HEK293 (cell line): ENCODE measurements at regions of chr20 and their contacts with region 1.

Region 1: DNA sequence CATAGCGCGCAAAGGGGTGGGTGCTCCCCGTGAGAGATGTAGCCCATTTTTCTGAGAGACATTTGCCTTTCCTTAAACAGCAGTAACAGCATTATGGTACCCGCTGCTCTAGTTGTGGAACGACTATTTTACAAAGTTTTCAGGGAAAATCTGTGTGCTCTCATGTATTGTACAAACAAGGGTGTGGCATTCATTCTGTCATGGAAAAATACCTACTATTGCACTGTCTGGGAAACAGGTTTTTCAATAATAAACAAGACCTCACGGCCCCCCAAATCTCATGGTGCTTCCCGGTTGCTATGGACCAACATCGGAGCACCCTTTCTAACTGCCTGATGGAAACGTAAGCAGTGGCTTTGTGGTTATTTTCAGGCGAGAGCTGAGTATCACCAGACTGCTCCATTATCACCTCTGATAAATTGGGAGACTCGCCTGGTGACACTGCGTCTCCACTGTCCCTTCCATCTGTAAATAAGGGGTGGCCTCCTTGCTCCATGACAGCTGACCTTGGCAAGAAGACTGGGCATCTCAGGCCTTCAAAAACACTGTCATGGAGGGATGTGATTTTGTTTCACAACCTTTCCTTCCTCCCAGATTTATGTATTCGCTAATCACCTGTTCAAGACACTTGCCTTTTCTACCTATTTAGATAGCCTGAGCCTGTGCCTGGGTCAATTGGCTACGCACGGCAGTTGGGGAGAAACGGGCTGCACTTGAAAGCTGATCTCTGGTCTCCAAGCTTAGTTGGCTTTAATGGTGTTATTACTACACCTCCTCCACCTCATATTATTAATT is 17.9 kb upstream of the CDH4 start:
- H3K4me3 ChIP-seq: no peak overlapping the region
- H3K27ac ChIP-seq: no peak overlapping the region
- H3K4me1 ChIP-seq: no peaks in the 10 kb centered on the region
- CTCF ChIP-seq: no peak

Region 2: GRCh38 chr20:60851826-60852704 is 382.1 kb before region 1 on chr20:
- CTCF ChIA-PET with region 1: interaction called, 14 read pairs
- POLR2A ChIA-PET with region 1: no interaction called
- H3K4me3 ChIP-seq: no peak overlapping the region
- H3K27ac ChIP-seq: no peak overlapping the region
- H3K4me1 ChIP-seq: no peaks in the 10 kb centered on the region
- CTCF ChIP-seq: 0 out of 2 replicates have a peak, but pooled peaks have one; percentile 25

Region 3: DNA sequence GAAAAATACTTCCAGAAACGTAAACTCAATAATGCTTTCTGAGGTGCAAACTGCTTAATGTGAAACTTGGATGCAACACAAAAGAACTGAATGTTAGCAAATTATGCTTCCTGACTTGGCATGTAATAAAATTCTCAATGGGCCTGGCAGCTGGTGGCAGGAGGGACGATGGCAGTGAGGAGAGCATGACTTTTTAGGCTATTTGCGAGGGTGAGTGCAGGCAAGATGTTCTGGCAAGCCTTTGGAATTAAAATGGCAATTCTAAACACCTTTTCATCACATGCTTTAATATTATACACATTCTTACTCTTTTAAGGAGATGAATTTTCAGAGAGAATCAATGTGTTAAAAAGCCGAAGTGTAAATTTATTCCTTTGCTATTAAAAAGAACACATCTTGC is 207.0 kb before region 1 on chr20:
- CTCF ChIA-PET with region 1: no interaction called
- POLR2A ChIA-PET with region 1: no interaction called
- H3K4me3 ChIP-seq: no peak overlapping the region
- H3K27ac ChIP-seq: no peak overlapping the region
- H3K4me1 ChIP-seq: no peaks in the 10 kb centered on the region
- CTCF ChIP-seq: no peak

Region 4: DNA sequence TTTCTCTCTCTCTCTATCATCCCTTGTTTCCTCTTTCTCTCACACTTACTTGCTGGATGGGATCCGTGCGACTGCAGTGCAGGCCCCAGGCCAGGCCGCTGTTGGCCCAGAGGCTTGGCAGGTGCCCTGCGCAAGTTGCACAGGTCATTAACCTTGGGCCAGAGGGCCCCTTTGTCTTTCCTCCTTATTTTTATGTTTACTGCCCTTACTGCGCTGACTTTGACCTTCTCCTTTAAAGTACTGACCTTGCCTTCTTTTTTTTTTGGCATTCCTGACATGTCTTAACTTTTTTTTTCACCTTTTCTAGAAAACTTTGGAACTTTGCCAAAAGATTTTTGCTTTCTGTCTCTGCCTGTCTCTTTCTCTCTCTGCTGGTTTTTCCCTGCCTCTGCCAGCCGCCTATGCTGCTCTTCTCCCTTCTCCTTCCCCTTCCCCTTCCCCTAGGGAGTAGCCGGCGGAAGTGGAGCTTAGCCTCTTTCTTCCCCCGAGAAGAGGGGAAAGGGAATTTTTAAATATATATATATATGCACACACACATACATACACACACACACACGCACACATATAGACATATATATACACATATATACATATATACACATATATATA is 41.8 kb before region 1 on chr20:
- CTCF ChIA-PET with region 1: interaction called, 11 read pairs
- POLR2A ChIA-PET with region 1: no interaction called
- H3K4me3 ChIP-seq: no peak overlapping the region
- H3K27ac ChIP-seq: no peak overlapping the region
- H3K4me1 ChIP-seq: no peaks in the 10 kb centered on the region
- CTCF ChIP-seq: no peak

Region 5: DNA sequence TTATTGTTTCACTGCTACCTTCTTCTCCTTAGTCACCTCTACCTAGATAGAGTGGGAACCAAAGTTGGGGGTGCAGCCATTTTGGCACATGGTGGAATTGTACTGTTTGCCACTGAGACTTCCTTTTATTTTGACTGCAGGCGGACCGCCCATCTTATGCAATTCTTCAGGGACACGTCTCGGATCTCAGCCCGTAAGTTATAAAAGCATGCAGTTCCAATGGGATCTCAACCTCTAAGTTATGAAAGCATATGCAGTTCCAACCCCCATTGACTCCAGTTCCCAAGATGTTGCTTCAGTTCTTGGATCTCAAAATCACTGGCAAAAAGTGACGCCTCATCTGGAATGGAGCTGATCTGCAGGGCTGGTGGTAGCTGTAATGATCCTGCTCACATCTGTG is 23.3 kb before region 1 on chr20:
- CTCF ChIA-PET with region 1: interaction called, 13 read pairs
- POLR2A ChIA-PET with region 1: no interaction called
- H3K4me3 ChIP-seq: no peak overlapping the region
- H3K27ac ChIP-seq: no peak overlapping the region
- H3K4me1 ChIP-seq: no peaks in the 10 kb centered on the region
- CTCF ChIP-seq: no peak

Region 6: DNA sequence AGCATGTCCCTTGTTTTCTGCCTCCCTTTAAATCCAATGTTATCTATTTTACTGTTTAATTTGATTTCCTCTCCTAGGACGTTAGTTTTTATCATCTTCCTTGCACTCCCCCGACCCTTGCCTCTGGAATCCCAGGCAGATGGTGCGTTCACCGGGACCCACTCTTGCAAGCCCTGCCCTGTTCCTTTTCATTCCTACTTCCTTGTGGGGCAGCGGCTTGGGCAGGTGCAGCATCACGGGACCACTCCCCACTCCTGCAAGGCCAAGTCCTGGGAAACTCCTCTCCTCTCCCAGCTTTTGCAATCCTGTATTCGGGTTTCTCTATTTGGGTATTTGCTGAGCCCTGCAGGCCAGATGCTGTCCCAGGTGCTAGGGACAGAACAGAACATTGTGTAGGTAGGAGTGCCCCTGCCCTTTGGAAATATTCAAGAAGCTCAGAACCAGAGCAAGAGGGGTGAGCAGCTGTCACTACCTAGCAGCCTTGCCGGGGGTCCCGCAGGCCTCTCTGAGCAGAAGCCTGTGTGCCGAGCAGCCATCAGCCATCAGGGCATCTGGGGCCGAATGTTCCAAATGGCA is 12.2 kb after region 1 on chr20:
- CTCF ChIA-PET with region 1: interaction called, 29 read pairs
- POLR2A ChIA-PET with region 1: no interaction called
- H3K4me3 ChIP-seq: no peak overlapping the region
- H3K27ac ChIP-seq: no peak overlapping the region
- H3K4me1 ChIP-seq: no peaks in the 10 kb centered on the region
- CTCF ChIP-seq: no peak

Region 7: GRCh38 chr20:61256365-61256764 is 22.2 kb after region 1 on chr20:
- CTCF ChIA-PET with region 1: no interaction called
- POLR2A ChIA-PET with region 1: no interaction called
- H3K4me3 ChIP-seq: no peak overlapping the region
- H3K27ac ChIP-seq: no peak overlapping the region
- H3K4me1 ChIP-seq: no peaks in the 10 kb centered on the region
- CTCF ChIP-seq: no peak